Naive thymus-derived CD4-positive, alpha-beta T cell (primary cell): ENCODE measurements at regions of chr5 and their contacts with region 1.

Region 1: GRCh38 chr5:179623003-179623880 is at the start of gene HNRNPH1:
- DNase-seq: peak; percentile 95 to 99 (median 99)
- ATAC-seq: peak; percentile 85
- H3K4me3 ChIP-seq: peak within 1 kb of the TSS; percentile 97
- H3K4me3 Mint-ChIP-seq: peak within 1 kb of the TSS; percentile 82 to 99 (median 98)
- H3K27ac ChIP-seq: peak within 1 kb of the TSS; percentile 98
- H3K27ac Mint-ChIP-seq: peak within 1 kb of the TSS; percentile 99 to 100 (median 99)
- H3K4me1 ChIP-seq: peaks cover 45 to 47% of the 10 kb centered on the region in 2 donors
- H3K4me1 Mint-ChIP-seq: peaks cover 35 to 56% (median 44%) of the 10 kb centered on the region in 7 donors
- H3K27me3 ChIP-seq: no peaks in the 10 kb centered on the region
- H3K27me3 Mint-ChIP-seq: peaks cover 0 to 8% (median 0%) of the 10 kb centered on the region in 5 donors
- total RNA-seq, gene HNRNPH1: 1,010 to 2,239 (median 1,692) TPM

Region 2: GRCh38 chr5:179023528-179024430 is 599.5 kb before region 1 on chr5 and contains the start of gene ZNF879:
- CTCF ChIA-PET with region 1: no interaction called
- POLR2A ChIA-PET with region 1: no interaction called
- intact Hi-C with region 1: loop called in 1 of 2 experiments (anchors 5 kb)
- DNase-seq: peak; percentile 88 to 96 (median 94)
- ATAC-seq: peak; percentile 97
- H3K4me3 ChIP-seq: peak within 1 kb of the TSS; percentile 63
- H3K4me3 Mint-ChIP-seq: peak within 1 kb of the TSS; percentile 87 to 99 (median 95)
- H3K27ac ChIP-seq: peak within 1 kb of the TSS; percentile 75
- H3K27ac Mint-ChIP-seq: peak within 1 kb of the TSS; percentile 77 to 94 (median 90)
- H3K4me1 ChIP-seq: peaks cover 8% of the 10 kb centered on the region in 2 donors
- H3K4me1 Mint-ChIP-seq: peaks cover 5 to 18% (median 13%) of the 10 kb centered on the region in 7 donors
- H3K27me3 ChIP-seq: no peaks in the 10 kb centered on the region
- H3K27me3 Mint-ChIP-seq: peaks cover 0 to 6% (median 5%) of the 10 kb centered on the region in 5 donors
- total RNA-seq, gene ZNF879: 4.2 to 20.0 (median 7.9) TPM

Region 3: DNA sequence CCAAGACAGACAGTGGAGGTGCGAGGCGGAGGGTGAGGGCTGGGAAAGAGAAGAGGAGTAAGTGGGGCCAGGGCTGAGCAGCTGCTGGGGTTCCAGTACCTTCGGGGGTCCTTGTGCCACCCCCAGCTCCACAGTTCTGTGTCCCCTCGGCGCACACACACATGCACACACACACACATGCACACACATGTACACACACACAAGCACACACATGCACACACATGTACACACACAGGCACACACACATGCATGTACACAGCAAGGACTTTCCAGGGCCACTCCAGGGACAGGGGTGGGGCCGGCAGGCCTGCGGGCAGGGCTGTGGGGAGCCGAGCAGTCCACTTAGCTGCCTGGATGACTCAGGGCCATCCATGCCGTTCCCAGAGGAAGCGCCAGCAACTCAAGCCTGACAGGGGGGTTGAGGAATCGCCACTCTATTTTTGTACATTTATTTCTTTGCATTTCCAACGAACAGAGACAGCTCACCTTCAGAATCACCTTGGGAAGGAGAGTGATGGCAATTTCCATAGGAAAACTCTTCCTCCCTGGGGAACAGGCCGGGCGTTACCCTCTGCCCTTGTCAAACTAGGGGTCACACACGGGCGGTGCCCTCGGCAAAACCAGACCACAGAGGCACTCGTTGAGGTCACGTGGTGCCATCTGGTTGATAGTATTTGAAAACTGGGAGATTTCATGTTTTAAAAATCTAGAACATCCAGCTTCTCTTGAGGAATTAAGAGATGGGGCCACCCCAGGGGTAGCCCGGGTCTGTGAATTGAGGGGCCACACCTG is 413.7 kb before region 1 on chr5:
- CTCF ChIA-PET with region 1: no interaction called
- POLR2A ChIA-PET with region 1: no interaction called
- intact Hi-C with region 1: no loop called
- DNase-seq: no peak
- ATAC-seq: no peak
- H3K4me3 ChIP-seq: no peak overlapping the region
- H3K4me3 Mint-ChIP-seq: no peak overlapping the region
- H3K27ac ChIP-seq: no peak overlapping the region
- H3K27ac Mint-ChIP-seq: no peak overlapping the region
- H3K4me1 ChIP-seq: no peaks in the 10 kb centered on the region
- H3K4me1 Mint-ChIP-seq: no peaks in the 10 kb centered on the region
- H3K27me3 ChIP-seq: no peaks in the 10 kb centered on the region
- H3K27me3 Mint-ChIP-seq: peaks cover 0 to 15% (median 0%) of the 10 kb centered on the region in 5 donors

Region 4: GRCh38 chr5:179559284-179560252 is 63.7 kb before region 1 on chr5:
- CTCF ChIA-PET with region 1: interaction called, 5 read pairs
- POLR2A ChIA-PET with region 1: interaction called, 72 read pairs
- intact Hi-C with region 1: loop called (anchors 1 kb)
- DNase-seq: peak; percentile 77 to 97 (median 86)
- ATAC-seq: peak; percentile 100
- H3K4me3 ChIP-seq: peak overlapping the region; percentile 75
- H3K4me3 Mint-ChIP-seq: peak overlapping the region; percentile 85 to 95 (median 91)
- H3K27ac ChIP-seq: peak overlapping the region; percentile 70
- H3K27ac Mint-ChIP-seq: peak overlapping the region; percentile 81 to 96 (median 93)
- H3K4me1 ChIP-seq: peaks cover 3 to 4% of the 10 kb centered on the region in 2 donors
- H3K4me1 Mint-ChIP-seq: peaks cover 11 to 46% (median 32%) of the 10 kb centered on the region in 7 donors
- H3K27me3 ChIP-seq: no peaks in the 10 kb centered on the region
- H3K27me3 Mint-ChIP-seq: no peaks in the 10 kb centered on the region

Region 5: DNA sequence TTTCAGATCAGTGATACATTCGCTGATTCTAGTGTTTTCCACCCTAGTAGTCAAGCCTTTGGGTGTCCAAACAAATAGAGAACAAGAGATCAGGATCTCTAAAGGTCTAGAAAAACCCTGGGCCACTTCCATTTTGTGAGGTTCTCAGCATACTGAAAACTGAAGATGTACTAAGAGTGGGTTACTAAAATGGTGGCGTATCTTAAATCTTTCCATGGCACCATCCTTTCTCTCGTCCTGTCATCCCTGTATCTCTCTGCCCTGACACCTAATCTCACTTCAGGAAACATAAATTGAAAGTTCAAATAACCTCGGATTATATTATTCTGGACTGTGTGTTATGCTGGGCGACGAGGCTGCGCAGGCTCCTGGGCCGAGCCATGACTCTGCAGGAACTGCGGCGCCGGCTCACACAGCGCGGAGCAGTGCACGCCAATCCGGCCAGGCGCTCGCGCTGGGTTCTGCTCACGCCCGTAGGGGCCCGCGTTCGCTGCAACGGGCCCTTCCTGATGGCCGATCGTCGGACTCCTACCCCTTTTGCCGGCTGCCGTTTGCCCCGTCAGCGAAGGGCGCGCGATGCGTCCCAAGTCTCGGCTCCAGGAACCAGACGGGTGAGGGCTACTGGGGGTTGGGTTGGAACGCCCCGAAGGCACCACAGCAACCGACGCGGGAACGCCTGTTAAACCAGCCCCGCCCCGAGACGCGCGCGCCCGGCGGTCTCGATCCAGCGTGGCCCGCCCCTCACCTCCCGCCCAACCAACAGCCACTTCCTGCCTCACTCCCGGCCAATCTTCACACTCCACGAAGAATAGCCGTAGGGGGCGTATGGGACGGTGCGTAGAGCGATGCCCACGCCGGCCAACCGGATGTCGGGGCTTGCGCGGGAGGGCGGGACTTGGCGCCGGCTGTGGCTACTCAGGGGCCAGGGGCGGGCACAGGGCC is 75.0 kb after region 1 on chr5:
- CTCF ChIA-PET with region 1: no interaction called
- POLR2A ChIA-PET with region 1: interaction called, 29 read pairs
- intact Hi-C with region 1: loop called (anchors 1 kb)
- DNase-seq: peak; percentile 94 to 99 (median 99)
- ATAC-seq: peak; percentile 93
- H3K4me3 ChIP-seq: peak overlapping the region; percentile 72
- H3K4me3 Mint-ChIP-seq: peak overlapping the region; percentile 89 to 97 (median 96)
- H3K27ac ChIP-seq: peak overlapping the region; percentile 100
- H3K27ac Mint-ChIP-seq: peak overlapping the region; percentile 94 to 100 (median 98)
- H3K4me1 ChIP-seq: peaks cover 21 to 25% of the 10 kb centered on the region in 2 donors
- H3K4me1 Mint-ChIP-seq: peaks cover 23 to 53% (median 46%) of the 10 kb centered on the region in 7 donors
- H3K27me3 ChIP-seq: no peaks in the 10 kb centered on the region
- H3K27me3 Mint-ChIP-seq: no peaks in the 10 kb centered on the region

Region 6: DNA sequence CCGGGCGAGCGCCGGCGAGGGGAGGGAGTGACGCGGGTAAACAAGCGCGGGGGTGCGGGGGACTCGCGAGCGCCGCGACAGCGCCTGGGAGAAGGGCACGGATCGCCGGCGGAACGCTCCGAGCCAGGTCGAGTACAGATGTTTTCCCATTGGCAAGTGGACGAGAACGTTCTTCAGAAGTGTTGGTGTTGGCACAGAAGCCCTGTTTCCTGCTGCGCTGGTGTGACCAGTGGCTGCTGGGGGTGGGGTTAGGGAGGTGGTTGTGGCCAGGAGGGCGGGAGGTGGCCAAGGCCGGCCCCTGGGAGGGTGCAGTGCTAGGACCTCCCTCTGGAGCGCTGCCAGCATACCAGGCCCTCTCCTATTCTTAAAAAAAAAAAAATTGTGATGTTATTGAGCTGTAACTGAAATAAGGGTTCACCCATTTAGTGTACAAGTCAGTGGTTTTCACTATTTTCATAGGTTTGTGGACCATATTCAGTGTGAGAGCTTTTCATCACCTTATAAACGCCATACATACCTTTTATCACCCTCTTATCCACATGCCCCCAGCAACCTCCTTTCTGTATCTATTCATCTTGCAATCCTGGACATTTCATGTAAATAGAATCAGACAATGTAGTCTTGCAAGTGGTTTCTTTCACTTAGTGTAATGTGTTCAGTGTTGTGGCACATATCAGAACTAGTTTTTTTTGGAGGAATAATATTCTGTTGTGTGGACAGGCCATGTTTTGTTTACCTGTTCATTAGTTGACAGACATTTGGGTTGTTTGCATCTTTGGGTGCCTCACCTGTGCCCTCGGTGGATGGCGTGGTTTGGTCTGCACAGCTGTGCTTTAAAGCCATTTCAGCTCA is 198.6 kb after region 1 on chr5:
- CTCF ChIA-PET with region 1: interaction called, 3 read pairs
- POLR2A ChIA-PET with region 1: interaction called, 15 read pairs
- intact Hi-C with region 1: loop called (anchors 1 kb)
- DNase-seq: peak; percentile 72 to 88 (median 85)
- ATAC-seq: peak; percentile 73
- H3K4me3 ChIP-seq: peak overlapping the region; percentile 87
- H3K4me3 Mint-ChIP-seq: peak overlapping the region; percentile 88 to 98 (median 95)
- H3K27ac ChIP-seq: peak overlapping the region; percentile 96
- H3K27ac Mint-ChIP-seq: peak overlapping the region; percentile 79 to 97 (median 94)
- H3K4me1 ChIP-seq: peaks cover 31 to 36% of the 10 kb centered on the region in 2 donors
- H3K4me1 Mint-ChIP-seq: peaks cover 30 to 62% (median 45%) of the 10 kb centered on the region in 7 donors
- H3K27me3 ChIP-seq: no peaks in the 10 kb centered on the region
- H3K27me3 Mint-ChIP-seq: no peaks in the 10 kb centered on the region

Region 7: GRCh38 chr5:180291943-180292831 is 668.9 kb after region 1 on chr5 and contains the start of gene MAPK9:
- CTCF ChIA-PET with region 1: no interaction called
- POLR2A ChIA-PET with region 1: no interaction called
- intact Hi-C with region 1: loop called in 1 of 2 experiments (anchors 2 kb)
- DNase-seq: peak; percentile 82 to 92 (median 86)
- ATAC-seq: peak; percentile 85
- H3K4me3 ChIP-seq: peak within 1 kb of the TSS; percentile 79
- H3K4me3 Mint-ChIP-seq: peak within 1 kb of the TSS; percentile 90 to 100 (median 98)
- H3K27ac ChIP-seq: peak within 1 kb of the TSS; percentile 96
- H3K27ac Mint-ChIP-seq: peak within 1 kb of the TSS; percentile 96 to 100 (median 99)
- H3K4me1 ChIP-seq: peaks cover 15 to 17% of the 10 kb centered on the region in 2 donors
- H3K4me1 Mint-ChIP-seq: peaks cover 31 to 75% (median 58%) of the 10 kb centered on the region in 7 donors
- H3K27me3 ChIP-seq: no peaks in the 10 kb centered on the region
- H3K27me3 Mint-ChIP-seq: no peaks in the 10 kb centered on the region
- total RNA-seq, gene MAPK9: 25.7 to 41.4 (median 31.2) TPM

Region 8: GRCh38 chr5:181260387-181261319 is 1637.4 kb after region 1 on chr5 and contains the start of gene TRIM52:
- CTCF ChIA-PET with region 1: no interaction called
- POLR2A ChIA-PET with region 1: no interaction called
- intact Hi-C with region 1: loop called in 1 of 2 experiments (anchors 5 kb)
- DNase-seq: peak; percentile 79 to 91 (median 90)
- ATAC-seq: peak; percentile 93
- H3K4me3 ChIP-seq: peak within 1 kb of the TSS; percentile 93
- H3K4me3 Mint-ChIP-seq: peak within 1 kb of the TSS; percentile 94 to 100 (median 98)
- H3K27ac ChIP-seq: peak within 1 kb of the TSS; percentile 97
- H3K27ac Mint-ChIP-seq: peak within 1 kb of the TSS; percentile 95 to 99 (median 98)
- H3K4me1 ChIP-seq: peaks cover 31 to 39% of the 10 kb centered on the region in 2 donors
- H3K4me1 Mint-ChIP-seq: peaks cover 34 to 60% (median 56%) of the 10 kb centered on the region in 7 donors
- H3K27me3 ChIP-seq: no peaks in the 10 kb centered on the region
- H3K27me3 Mint-ChIP-seq: no peaks in the 10 kb centered on the region
- total RNA-seq, gene TRIM52: 31.4 to 71.6 (median 35.7) TPM